ENCODE measurements at regions of chr20 and their contacts with region 1.

Region 1: DNA sequence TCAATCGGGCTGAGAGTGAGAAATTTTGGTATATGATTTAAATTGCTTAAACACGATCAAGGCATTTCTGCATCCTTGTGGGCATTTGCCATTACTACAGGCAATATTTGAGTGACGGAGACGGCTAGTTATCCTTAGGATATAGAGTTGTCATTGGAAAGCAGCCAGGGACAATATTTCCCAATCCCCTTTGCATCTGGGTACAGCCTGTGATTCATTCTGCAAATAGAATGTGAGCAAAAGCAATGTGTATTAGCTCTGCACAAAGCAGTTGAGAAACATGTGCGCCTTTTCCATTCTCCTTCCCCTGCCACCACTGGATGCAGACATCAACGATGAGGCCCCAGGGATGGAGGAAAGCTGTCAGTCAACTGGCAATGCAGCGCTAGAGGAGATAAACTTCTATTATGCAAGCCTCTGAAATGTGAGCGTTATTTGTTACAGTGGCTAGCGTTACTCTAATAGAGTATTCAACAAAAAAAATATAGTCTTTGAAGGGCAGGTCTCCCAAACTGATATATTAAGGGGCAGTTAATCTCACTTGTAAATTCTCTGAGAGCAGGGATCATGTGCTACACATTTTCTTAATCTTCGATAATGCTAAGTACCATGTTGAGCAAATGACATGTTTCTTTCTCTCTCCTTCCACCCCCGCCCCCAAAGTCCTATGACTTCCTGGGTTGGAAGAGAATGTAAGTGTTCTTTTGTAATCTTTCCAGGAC is 37.1 kb upstream of the NCOA3 start:
- DNase-seq: peak; percentile 94
- H3K4me3 ChIP-seq: no peak overlapping the region
- H3K27ac ChIP-seq: no peak overlapping the region
- H3K4me1 ChIP-seq: peaks cover 6% of the 10 kb centered on the region
- H3K27me3 ChIP-seq: no peaks in the 10 kb centered on the region
- CTCF ChIP-seq: peak; percentile 13 to 27
- POLR2A ChIP-seq: no peak

Region 2: GRCh38 chr20:47196091-47197081 is 268.2 kb before region 1 on chr20:
- CTCF ChIA-PET with region 1: interaction called, 3 read pairs
- POLR2A ChIA-PET with region 1: no interaction called
- dilution Hi-C with region 1: no loop called
- intact Hi-C with region 1: loop called (anchors 2 kb)
- DNase-seq: peak; percentile 63
- H3K4me3 ChIP-seq: no peak overlapping the region
- H3K27ac ChIP-seq: no peak overlapping the region
- H3K4me1 ChIP-seq: peaks cover 3% of the 10 kb centered on the region
- H3K27me3 ChIP-seq: peaks cover 0 to 2% of the 10 kb centered on the region in 2 experiments
- CTCF ChIP-seq: peak; percentile 95 to 98
- POLR2A ChIP-seq: no peak

Region 3: GRCh38 chr20:47231382-47232039 is 233.0 kb before region 1 on chr20:
- CTCF ChIA-PET with region 1: no interaction called
- POLR2A ChIA-PET with region 1: no interaction called
- dilution Hi-C with region 1: no loop called
- intact Hi-C with region 1: no loop called
- DNase-seq: no peak
- H3K4me3 ChIP-seq: no peak overlapping the region
- H3K27ac ChIP-seq: no peak overlapping the region
- H3K4me1 ChIP-seq: no peaks in the 10 kb centered on the region
- H3K27me3 ChIP-seq: no peaks in the 10 kb centered on the region
- CTCF ChIP-seq: no peak
- POLR2A ChIP-seq: no peak

Region 4: DNA sequence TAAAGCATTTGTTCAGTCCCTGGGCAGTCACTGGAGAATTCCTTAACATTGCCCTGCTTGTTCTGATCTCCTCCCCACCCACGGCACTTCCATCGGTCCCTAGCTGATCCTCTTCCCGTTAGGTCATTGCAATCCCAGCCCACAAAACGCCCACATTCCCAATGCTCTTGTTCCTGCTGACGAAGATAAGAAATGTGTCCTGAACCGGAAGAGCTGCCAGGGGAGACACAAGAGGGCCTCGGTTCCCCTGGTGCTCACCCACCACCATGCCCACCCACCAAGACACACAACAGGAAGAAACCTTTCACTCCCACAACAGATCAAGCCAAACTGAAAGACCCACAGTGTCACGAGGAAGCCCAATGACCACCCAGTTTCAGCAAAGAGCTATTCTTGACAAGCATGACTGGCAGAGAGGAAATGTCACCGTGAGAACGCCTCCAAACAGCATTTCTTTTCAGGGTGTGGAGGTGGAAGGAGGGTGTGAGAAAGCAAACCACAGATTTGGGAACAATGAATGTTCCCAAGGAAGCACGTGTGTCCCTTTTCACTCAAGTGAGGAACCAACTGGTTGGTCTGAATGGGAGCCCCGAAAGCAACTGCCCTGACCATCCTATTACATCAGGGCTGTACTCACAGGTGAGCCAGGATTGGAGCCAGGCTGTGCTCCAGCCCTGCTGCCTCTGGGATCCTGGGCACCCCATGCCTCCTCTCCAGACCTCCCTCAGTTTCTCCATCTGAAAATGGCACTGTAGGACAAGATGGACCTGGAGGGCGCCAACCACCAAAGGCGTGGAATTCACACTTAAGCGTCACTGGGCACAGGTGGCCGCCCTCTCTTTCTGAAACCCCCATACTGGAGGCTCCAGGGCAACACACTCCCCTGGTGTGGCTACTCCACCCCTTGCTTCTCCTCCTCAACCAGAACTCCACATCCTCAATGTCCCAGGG is 205.5 kb before region 1 on chr20:
- CTCF ChIA-PET with region 1: no interaction called
- POLR2A ChIA-PET with region 1: no interaction called
- dilution Hi-C with region 1: no loop called
- intact Hi-C with region 1: loop called (anchors 10 kb)
- DNase-seq: peak; percentile 66
- H3K4me3 ChIP-seq: no peak overlapping the region
- H3K27ac ChIP-seq: peak overlapping the region; percentile 56
- H3K4me1 ChIP-seq: peaks cover 14% of the 10 kb centered on the region
- H3K27me3 ChIP-seq: no peaks in the 10 kb centered on the region
- CTCF ChIP-seq: no peak
- POLR2A ChIP-seq: no peak

Region 5: DNA sequence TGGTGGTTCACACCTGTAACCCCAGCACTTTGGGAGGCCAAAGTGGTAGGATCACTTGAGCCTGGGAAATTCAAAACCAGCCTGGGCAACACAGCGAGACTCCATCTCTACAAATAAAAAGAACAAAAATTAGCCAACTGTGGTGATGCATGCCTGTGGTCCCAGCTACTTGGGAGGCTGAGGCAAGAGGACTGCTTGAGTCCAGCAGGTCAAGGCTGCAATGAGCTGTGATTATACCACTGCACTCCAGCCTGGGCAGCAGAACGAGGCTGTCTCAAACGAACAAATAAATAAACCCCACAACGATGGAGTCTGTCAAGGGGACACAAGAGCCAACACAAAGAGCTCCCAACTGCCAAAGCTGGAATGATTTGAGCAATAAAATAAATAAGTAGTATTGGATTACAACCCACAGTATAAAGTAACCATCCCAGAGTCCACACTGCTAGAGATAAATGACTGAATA is 121.5 kb before region 1 on chr20:
- CTCF ChIA-PET with region 1: no interaction called
- POLR2A ChIA-PET with region 1: no interaction called
- dilution Hi-C with region 1: no loop called
- intact Hi-C with region 1: no loop called
- DNase-seq: no peak
- H3K4me3 ChIP-seq: no peak overlapping the region
- H3K27ac ChIP-seq: no peak overlapping the region
- H3K4me1 ChIP-seq: peaks cover 6% of the 10 kb centered on the region
- H3K27me3 ChIP-seq: no peaks in the 10 kb centered on the region
- CTCF ChIP-seq: no peak
- POLR2A ChIP-seq: no peak

Region 6: GRCh38 chr20:47392015-47392720 is 72.4 kb before region 1 on chr20:
- CTCF ChIA-PET with region 1: no interaction called
- POLR2A ChIA-PET with region 1: no interaction called
- dilution Hi-C with region 1: no loop called
- intact Hi-C with region 1: loop called (anchors 1 kb)
- DNase-seq: peak; percentile 85
- H3K4me3 ChIP-seq: no peak overlapping the region
- H3K27ac ChIP-seq: peak overlapping the region; percentile 91
- H3K4me1 ChIP-seq: peaks cover 12% of the 10 kb centered on the region
- H3K27me3 ChIP-seq: no peaks in the 10 kb centered on the region
- CTCF ChIP-seq: no peak
- POLR2A ChIP-seq: peak; percentile 53

Region 7: GRCh38 chr20:47480239-47480638 is 15.7 kb after region 1 on chr20:
- CTCF ChIA-PET with region 1: no interaction called
- POLR2A ChIA-PET with region 1: no interaction called
- dilution Hi-C with region 1: no loop called
- intact Hi-C with region 1: no loop called
- DNase-seq: no peak
- H3K4me3 ChIP-seq: no peak overlapping the region
- H3K27ac ChIP-seq: no peak overlapping the region
- H3K4me1 ChIP-seq: no peaks in the 10 kb centered on the region
- H3K27me3 ChIP-seq: no peaks in the 10 kb centered on the region
- CTCF ChIP-seq: no peak
- POLR2A ChIP-seq: no peak

Measured in endothelial cell of umbilical vein (primary cell).